ENCODE measurements at regions of chr15 and their contacts with region 1.

Region 1: DNA sequence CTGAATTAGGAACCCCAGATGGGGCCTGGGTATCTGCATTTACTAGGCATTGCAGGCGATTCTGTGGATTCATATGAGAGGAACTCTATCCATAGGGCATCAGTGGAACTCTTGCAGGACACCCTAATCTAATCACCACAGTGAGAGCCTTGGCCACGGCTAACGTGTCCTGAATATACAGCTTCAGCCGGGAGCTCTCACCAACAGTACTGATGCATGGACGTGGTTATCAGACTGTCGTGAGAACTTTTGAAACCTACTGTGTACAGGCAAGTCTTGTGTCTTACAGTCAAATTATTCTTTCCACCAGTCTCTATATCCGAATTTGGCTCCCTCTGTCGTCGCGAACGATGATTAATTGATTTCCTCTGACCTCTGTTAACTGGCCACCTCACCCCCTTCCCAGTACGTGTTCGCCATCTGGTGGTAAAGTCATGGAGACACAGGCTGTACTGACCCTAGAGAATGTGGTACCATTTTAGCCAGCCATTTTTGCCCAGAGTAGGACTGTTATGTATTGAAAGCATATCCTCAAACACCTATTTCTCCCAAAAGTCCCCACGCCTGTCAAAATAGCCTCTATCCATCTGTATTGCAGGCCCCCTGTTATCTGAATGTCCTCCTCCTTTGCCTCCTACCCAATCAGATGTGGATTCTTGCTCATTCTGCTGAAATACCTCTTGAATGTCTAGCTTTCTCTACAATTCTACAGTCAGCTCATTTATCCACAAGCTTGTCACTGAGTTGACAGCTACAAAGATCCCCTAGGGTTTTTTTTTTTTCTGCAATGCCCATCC is 39.7 kb downstream of the GLDN start:
- DNase-seq: peak in 1 of 2 experiments; percentile 61
- H3K4me3 ChIP-seq: no peak overlapping the region
- H3K27ac ChIP-seq: no peak overlapping the region
- H3K4me1 ChIP-seq: no peaks in the 10 kb centered on the region; a peak in 1 of 7 replicates
- H3K27me3 ChIP-seq: no peaks in the 10 kb centered on the region
- CTCF ChIP-seq: peak; percentile 83 to 99 (median 98)
- EP300 ChIP-seq: no peak
- POLR2A ChIP-seq: no peak
- RAD21 ChIP-seq: peak; percentile 99 to 100

Region 2: GRCh38 chr15:51132384-51133139 is 248.6 kb before region 1 on chr15:
- CTCF ChIA-PET with region 1: interaction called, 10 read pairs
- POLR2A ChIA-PET with region 1: no interaction called
- DNase-seq: peak in 1 of 2 experiments; percentile 72
- H3K4me3 ChIP-seq: no peak overlapping the region
- H3K27ac ChIP-seq: no peak overlapping the region
- H3K4me1 ChIP-seq: peaks cover 0 to 3% (median 0%) of the 10 kb centered on the region in 4 experiments; a peak in 1 of 7 replicates
- H3K27me3 ChIP-seq: no peaks in the 10 kb centered on the region
- CTCF ChIP-seq: peak; percentile 88 to 97 (median 93)
- EP300 ChIP-seq: no peak
- POLR2A ChIP-seq: no peak
- RAD21 ChIP-seq: peak; percentile 75 to 80

Region 3: DNA sequence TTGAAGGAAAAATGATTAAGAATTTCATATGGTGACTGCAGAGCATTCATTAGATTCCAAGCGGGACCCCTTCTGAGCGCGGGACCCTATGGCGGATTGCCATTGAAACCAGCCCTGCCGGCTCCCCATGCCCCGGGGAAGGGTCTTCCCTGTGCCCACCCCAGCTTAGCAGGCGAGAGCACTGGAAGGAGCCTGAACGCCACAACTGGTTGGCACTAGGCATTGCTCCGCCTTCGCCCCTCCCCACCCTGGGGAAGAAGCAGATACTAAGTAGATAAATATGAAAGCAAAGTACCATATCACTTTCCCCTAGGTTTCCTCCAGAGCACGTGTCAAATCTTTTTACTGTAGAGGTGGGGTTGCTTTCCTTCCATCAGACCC is 113.5 kb before region 1 on chr15:
- CTCF ChIA-PET with region 1: interaction called, 15 read pairs
- POLR2A ChIA-PET with region 1: no interaction called
- DNase-seq: peak in 1 of 2 experiments; percentile 52
- H3K4me3 ChIP-seq: peak overlapping the region; percentile 53 to 69 (median 56)
- H3K27ac ChIP-seq: no peak overlapping the region
- H3K4me1 ChIP-seq: peaks cover 0 to 8% (median 3%) of the 10 kb centered on the region in 4 experiments; a peak in 5 of 7 replicates
- H3K27me3 ChIP-seq: peaks cover 3 to 29% (median 25%) of the 10 kb centered on the region in 4 experiments
- CTCF ChIP-seq: no peak
- EP300 ChIP-seq: no peak
- POLR2A ChIP-seq: no peak
- RAD21 ChIP-seq: no peak

Region 4: GRCh38 chr15:51299187-51300066 is 81.8 kb before region 1 on chr15:
- CTCF ChIA-PET with region 1: interaction called, 24 read pairs
- POLR2A ChIA-PET with region 1: no interaction called
- DNase-seq: no peak
- H3K4me3 ChIP-seq: no peak overlapping the region
- H3K27ac ChIP-seq: no peak overlapping the region
- H3K4me1 ChIP-seq: no peaks in the 10 kb centered on the region
- H3K27me3 ChIP-seq: no peaks in the 10 kb centered on the region; a peak in 1 of 7 replicates
- CTCF ChIP-seq: no peak
- EP300 ChIP-seq: no peak
- POLR2A ChIP-seq: no peak
- RAD21 ChIP-seq: no peak

Region 5: GRCh38 chr15:51348688-51349087 is 32.5 kb before region 1 on chr15:
- CTCF ChIA-PET with region 1: interaction called, 13 read pairs
- POLR2A ChIA-PET with region 1: no interaction called
- DNase-seq: no peak
- H3K4me3 ChIP-seq: no peak overlapping the region
- H3K27ac ChIP-seq: no peak overlapping the region
- H3K4me1 ChIP-seq: no peaks in the 10 kb centered on the region
- H3K27me3 ChIP-seq: peaks cover 0 to 3% (median under 1%) of the 10 kb centered on the region in 4 experiments; a peak in 1 of 7 replicates
- CTCF ChIP-seq: no peak
- EP300 ChIP-seq: no peak
- POLR2A ChIP-seq: no peak
- RAD21 ChIP-seq: no peak

Region 6: DNA sequence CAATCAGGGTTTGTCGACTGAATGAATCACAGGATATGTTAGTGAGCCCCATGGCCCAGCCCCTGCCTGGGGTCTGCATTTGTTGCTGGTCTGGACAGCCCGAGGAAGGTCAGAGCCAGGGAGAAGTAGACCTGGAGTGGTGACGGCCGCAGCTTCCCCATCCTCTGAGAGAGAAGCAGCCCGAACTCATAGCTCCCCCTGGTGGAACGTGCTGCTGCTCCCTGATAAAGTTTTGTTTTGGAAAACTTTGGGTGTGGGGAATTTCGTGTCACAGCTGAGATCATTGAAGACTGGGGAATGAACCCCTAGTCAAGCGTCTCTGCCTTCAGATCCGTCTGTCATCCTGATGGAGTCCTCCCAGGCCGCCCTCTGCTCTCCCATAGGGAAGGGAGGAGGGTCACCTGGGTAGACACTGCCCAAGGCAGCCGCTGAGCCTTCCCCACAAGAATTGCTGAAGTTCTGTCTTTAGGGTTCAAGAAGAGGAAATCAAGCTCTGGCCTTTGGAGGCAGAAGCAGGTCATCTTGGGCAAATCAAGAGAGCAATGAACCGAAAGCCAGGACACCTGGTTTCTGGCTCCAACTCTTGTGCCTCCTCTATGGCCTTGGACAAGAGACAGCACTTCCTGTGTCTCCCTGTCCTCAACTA is 20.8 kb after region 1 on chr15:
- CTCF ChIA-PET with region 1: interaction called, 70 read pairs
- POLR2A ChIA-PET with region 1: no interaction called
- DNase-seq: peak in 1 of 2 experiments; percentile 86
- H3K4me3 ChIP-seq: no peak overlapping the region
- H3K27ac ChIP-seq: no peak overlapping the region
- H3K4me1 ChIP-seq: peaks cover 0 to 8% (median 0%) of the 10 kb centered on the region in 4 experiments; a peak in 2 of 7 replicates
- H3K27me3 ChIP-seq: no peaks in the 10 kb centered on the region
- CTCF ChIP-seq: peak; percentile 83 to 87 (median 84)
- EP300 ChIP-seq: no peak
- POLR2A ChIP-seq: no peak
- RAD21 ChIP-seq: peak; percentile 75 to 80

Region 7: DNA sequence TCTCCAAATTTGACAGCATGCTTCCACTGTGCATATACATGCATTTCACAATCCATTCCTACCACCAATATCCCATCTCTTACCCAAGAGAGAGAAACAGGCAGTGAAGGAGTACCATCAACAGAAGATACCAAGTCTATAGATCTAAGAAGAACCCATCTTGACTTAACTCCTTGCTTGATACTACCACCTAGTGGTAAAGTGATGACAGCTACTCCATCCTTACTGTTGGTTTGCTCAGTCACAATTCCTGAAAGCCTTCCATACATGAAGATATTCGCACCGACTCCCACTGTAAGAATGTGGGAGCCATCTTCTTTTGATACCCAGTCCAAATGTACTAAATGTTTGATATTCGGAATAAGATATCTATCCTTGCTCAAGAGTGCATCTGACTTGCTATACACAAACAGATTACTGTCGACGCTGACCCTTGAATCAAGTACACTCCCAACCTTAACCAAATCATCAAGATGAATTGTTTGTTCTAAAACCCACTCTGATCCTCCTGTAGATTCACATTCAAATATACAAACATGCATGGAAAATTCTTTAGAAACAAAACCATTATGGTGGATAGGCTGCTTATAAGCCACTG is 118.3 kb after region 1 on chr15:
- CTCF ChIA-PET with region 1: interaction called, 12 read pairs
- POLR2A ChIA-PET with region 1: no interaction called
- DNase-seq: no peak
- H3K4me3 ChIP-seq: no peak overlapping the region
- H3K27ac ChIP-seq: no peak overlapping the region
- H3K4me1 ChIP-seq: no peaks in the 10 kb centered on the region
- H3K27me3 ChIP-seq: no peaks in the 10 kb centered on the region
- CTCF ChIP-seq: peak in 2 of 3 experiments; percentile 63 to 85; a peak in 3 of 4 replicates
- EP300 ChIP-seq: no peak
- POLR2A ChIP-seq: no peak
- RAD21 ChIP-seq: peak; percentile 81 to 83

Region 8: DNA sequence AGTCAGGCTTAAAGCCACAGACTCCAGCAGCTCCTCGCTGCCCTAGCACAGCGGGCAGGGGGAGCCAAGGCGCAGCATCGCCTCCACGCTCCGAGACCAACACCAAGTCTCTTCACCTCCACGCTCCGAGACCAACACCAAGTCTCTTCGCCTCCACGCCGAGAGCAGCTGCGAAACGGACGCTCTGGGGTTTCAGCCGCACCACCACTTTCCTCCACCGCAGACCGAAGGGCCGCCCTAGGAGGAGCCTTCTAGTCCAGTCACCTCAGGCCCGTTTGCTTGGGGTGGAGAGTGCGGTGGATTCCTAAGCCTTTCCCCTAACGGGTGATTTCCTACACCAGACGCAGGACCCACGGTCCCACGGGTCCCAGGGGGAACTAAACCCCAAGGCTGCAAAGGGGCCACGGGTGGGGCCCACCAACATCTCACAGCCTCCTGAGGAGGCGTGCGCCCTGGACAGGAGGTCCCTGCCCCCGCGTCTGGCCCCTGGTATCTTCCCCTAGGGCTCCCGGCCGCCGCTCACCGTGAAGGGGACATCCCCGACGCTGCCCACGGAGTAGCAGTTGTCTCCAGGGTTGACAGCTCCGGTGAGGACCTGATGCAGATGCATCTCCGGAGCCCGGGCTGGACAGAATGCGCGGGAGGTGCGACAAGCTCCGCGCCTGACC is 240.9 kb after region 1 on chr15:
- CTCF ChIA-PET with region 1: no interaction called
- POLR2A ChIA-PET with region 1: no interaction called
- DNase-seq: peak in 1 of 2 experiments; percentile 72
- H3K4me3 ChIP-seq: peak overlapping the region; percentile 92 to 99 (median 96)
- H3K27ac ChIP-seq: no peak overlapping the region
- H3K4me1 ChIP-seq: peaks cover 0 to 5% (median 4%) of the 10 kb centered on the region in 4 experiments; a peak in 4 of 7 replicates
- H3K27me3 ChIP-seq: peaks cover 0 to 10% (median 4%) of the 10 kb centered on the region in 4 experiments; a peak in 5 of 7 replicates
- CTCF ChIP-seq: peak in 2 of 3 experiments; percentile 0 to 9; a peak in 1 of 4 replicates
- EP300 ChIP-seq: no peak
- POLR2A ChIP-seq: no peak
- RAD21 ChIP-seq: no peak

Region 9: DNA sequence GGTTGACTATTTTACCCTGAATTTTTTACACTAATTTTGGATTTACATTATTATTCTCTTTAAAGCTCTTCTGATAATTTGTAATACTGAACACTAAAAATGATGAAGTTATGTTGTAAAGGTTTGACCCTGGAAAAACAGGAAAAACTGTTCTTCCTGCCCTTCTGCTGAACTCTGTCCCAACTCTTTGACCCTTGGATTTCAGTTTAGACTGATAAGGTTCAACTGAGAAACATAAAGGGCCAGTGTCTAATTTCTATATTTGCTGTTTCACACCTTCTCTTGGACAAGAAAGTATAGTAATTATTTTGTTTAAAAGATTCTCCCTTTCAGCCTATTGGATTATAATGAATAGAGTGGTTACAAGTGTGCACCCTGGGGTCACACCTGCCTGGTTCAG is 435.4 kb after region 1 on chr15:
- CTCF ChIA-PET with region 1: no interaction called
- POLR2A ChIA-PET with region 1: no interaction called
- DNase-seq: no peak
- H3K4me3 ChIP-seq: no peak overlapping the region
- H3K27ac ChIP-seq: no peak overlapping the region
- H3K4me1 ChIP-seq: no peaks in the 10 kb centered on the region; a peak in 1 of 7 replicates
- H3K27me3 ChIP-seq: no peaks in the 10 kb centered on the region
- CTCF ChIP-seq: no peak
- EP300 ChIP-seq: no peak
- POLR2A ChIP-seq: no peak
- RAD21 ChIP-seq: no peak

Measured in H1 (cell line).